Aorta (tissue), 5 donors: ENCODE measurements at regions of chr2 and their contacts with region 1.

Region 1: GRCh38 chr2:168072626-168073303 is 174.6 kb downstream of the STK39 start:
- DNase-seq: no peak
- ATAC-seq: no peak
- H3K4me3 ChIP-seq: no peak overlapping the region
- H3K27ac ChIP-seq: no peak overlapping the region
- H3K4me1 ChIP-seq: peaks cover 0 to 3% of the 10 kb centered on the region in 2 donors
- H3K27me3 ChIP-seq: no peaks in the 10 kb centered on the region

Region 2: GRCh38 chr2:167331636-167332232 is 741.0 kb before region 1 on chr2:
- intact Hi-C with region 1: loop called in 1 of 2 experiments (anchors 5 kb)
- DNase-seq: no peak
- ATAC-seq: no peak
- H3K4me3 ChIP-seq: no peak overlapping the region
- H3K27ac ChIP-seq: no peak overlapping the region
- H3K4me1 ChIP-seq: no peaks in the 10 kb centered on the region
- H3K27me3 ChIP-seq: no peaks in the 10 kb centered on the region